Activated CD8-positive, alpha-beta T cell treated with anti-CD3 and anti-CD28 coated beads, Interleukin-2, amount 10 ng/mL, durations not matched to agents 7 days and 5 days (primary cell): ENCODE measurements at regions of chr21 and their contacts with region 1.

Region 1: GRCh38 chr21:36310016-36310415 is 10.0 kb upstream of the MORC3 start:
- DNase-seq: no peak
- ATAC-seq: peak; percentile 64
- H3K4me3 Mint-ChIP-seq: no peak overlapping the region
- H3K27ac Mint-ChIP-seq: no peak overlapping the region
- H3K4me1 Mint-ChIP-seq: peaks cover 6% of the 10 kb centered on the region
- H3K27me3 Mint-ChIP-seq: no peaks in the 10 kb centered on the region

Region 2: GRCh38 chr21:36297921-36298594 is 12.0 kb before region 1 on chr21:
- CTCF ChIA-PET with region 1: interaction called, 6 read pairs
- POLR2A ChIA-PET with region 1: interaction called, 176 read pairs
- DNase-seq: peak; percentile 89
- ATAC-seq: peak; percentile 100
- H3K4me3 Mint-ChIP-seq: peak overlapping the region; percentile 62
- H3K27ac Mint-ChIP-seq: peak overlapping the region; percentile 96
- H3K4me1 Mint-ChIP-seq: peaks cover 37% of the 10 kb centered on the region
- H3K27me3 Mint-ChIP-seq: no peaks in the 10 kb centered on the region

Region 3: GRCh38 chr21:36379251-36379650 is 69.2 kb after region 1 on chr21:
- CTCF ChIA-PET with region 1: no interaction called
- POLR2A ChIA-PET with region 1: no interaction called
- DNase-seq: no peak
- ATAC-seq: no peak
- H3K4me3 Mint-ChIP-seq: no peak overlapping the region
- H3K27ac Mint-ChIP-seq: no peak overlapping the region
- H3K4me1 Mint-ChIP-seq: peaks cover 3% of the 10 kb centered on the region
- H3K27me3 Mint-ChIP-seq: no peaks in the 10 kb centered on the region